Activated CD4-positive, alpha-beta T cell treated with anti-CD3 and anti-CD28 coated beads for 36 hours (primary cell): ENCODE measurements at regions of chr5 and their contacts with region 1.

Region 1: GRCh38 chr5:132019857-132020555 is 8.5 kb upstream of the ACSL6 start:
- DNase-seq: peak; percentile 89
- ATAC-seq: peak; percentile 90
- H3K4me3 Mint-ChIP-seq: peak overlapping the region; percentile 35
- H3K27ac Mint-ChIP-seq: peak overlapping the region; percentile 91
- H3K4me1 Mint-ChIP-seq: peaks cover 41% of the 10 kb centered on the region
- H3K27me3 Mint-ChIP-seq: peaks cover 36% of the 10 kb centered on the region

Region 2: GRCh38 chr5:131170540-131171275 is 849.3 kb before region 1 on chr5 and contains the start of gene LYRM7:
- CTCF ChIA-PET with region 1: no interaction called
- POLR2A ChIA-PET with region 1: no interaction called
- intact Hi-C with region 1: loop called in 1 of 2 experiments (anchors 5 kb)
- DNase-seq: peak; percentile 97
- ATAC-seq: peak; percentile 96
- H3K4me3 Mint-ChIP-seq: peak within 1 kb of the TSS; percentile 95
- H3K27ac Mint-ChIP-seq: peak within 1 kb of the TSS; percentile 93
- H3K4me1 Mint-ChIP-seq: peaks cover 34% of the 10 kb centered on the region
- H3K27me3 Mint-ChIP-seq: no peaks in the 10 kb centered on the region
- total RNA-seq, gene LYRM7: 16.0 to 20.7 TPM

Region 3: DNA sequence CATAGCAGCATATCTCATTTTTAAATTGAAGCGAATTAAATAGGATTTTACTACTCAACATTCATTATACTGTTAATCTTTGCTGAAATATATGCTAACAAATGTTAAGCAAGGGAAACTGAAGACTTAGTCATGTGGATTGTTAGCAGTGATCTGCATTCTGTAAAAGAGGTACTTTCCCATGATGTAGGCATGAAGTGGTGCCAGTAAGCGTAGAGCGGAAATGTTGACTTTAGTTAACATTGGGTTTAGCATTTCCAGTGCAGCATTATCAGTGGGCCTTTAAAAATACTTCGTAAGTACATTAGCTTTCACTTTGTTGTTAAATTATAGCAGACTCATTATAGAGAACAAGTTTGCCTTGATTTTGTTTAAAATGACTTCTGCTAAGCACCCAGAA is 625.9 kb before region 1 on chr5:
- CTCF ChIA-PET with region 1: no interaction called
- POLR2A ChIA-PET with region 1: no interaction called
- intact Hi-C with region 1: loop called in 1 of 2 experiments (anchors 5 kb)
- DNase-seq: peak; percentile 68
- ATAC-seq: peak; percentile 68
- H3K4me3 Mint-ChIP-seq: peak overlapping the region; percentile 65
- H3K27ac Mint-ChIP-seq: peak overlapping the region; percentile 97
- H3K4me1 Mint-ChIP-seq: peaks cover 85% of the 10 kb centered on the region
- H3K27me3 Mint-ChIP-seq: no peaks in the 10 kb centered on the region

Region 4: GRCh38 chr5:131488463-131488862 is 531.5 kb before region 1 on chr5:
- CTCF ChIA-PET with region 1: no interaction called
- POLR2A ChIA-PET with region 1: no interaction called
- intact Hi-C with region 1: loop called in 1 of 2 experiments (anchors 5 kb)
- DNase-seq: no peak
- ATAC-seq: peak; percentile 85
- H3K4me3 Mint-ChIP-seq: peak overlapping the region; percentile 21
- H3K27ac Mint-ChIP-seq: peak overlapping the region; percentile 42
- H3K4me1 Mint-ChIP-seq: peaks cover 34% of the 10 kb centered on the region
- H3K27me3 Mint-ChIP-seq: no peaks in the 10 kb centered on the region

Region 5: DNA sequence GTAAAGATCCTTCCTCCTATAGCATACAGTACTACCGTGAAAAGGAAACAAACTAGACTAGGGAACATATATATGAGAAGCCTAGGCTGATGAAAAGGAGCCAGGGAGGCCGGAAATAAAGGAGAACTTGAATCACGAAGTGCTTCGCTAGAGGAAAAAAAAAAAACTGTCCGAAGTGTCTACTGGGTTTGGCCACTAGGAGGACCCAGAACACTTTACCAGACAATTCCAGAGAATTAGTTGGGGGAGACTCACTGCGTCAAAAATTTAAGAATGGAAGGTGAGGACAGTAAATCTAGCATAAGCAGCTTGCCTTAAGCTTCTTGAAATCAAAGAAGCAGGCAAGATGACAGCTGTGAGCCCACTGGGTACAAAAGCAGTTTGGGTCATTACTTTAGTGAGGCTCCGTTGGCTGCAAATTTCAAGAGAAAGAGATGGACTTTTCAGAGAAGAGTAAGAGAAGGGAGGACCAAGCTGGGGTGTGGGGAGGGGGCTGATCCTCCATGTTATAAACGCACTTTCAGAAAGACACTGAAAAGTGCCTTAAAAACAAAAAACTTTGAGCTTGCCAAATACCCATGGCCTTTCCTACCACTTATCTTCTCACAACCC is 160.2 kb after region 1 on chr5:
- CTCF ChIA-PET with region 1: no interaction called
- POLR2A ChIA-PET with region 1: no interaction called
- intact Hi-C with region 1: loop called in 1 of 2 experiments (anchors 5 kb)
- DNase-seq: peak; percentile 19
- ATAC-seq: peak; percentile 38
- H3K4me3 Mint-ChIP-seq: no peak overlapping the region
- H3K27ac Mint-ChIP-seq: peak overlapping the region; percentile 73
- H3K4me1 Mint-ChIP-seq: peaks cover 36% of the 10 kb centered on the region
- H3K27me3 Mint-ChIP-seq: no peaks in the 10 kb centered on the region